PC-9 (cell line): ENCODE measurements at regions of chr13 and their contacts with region 1.

Region 1: DNA sequence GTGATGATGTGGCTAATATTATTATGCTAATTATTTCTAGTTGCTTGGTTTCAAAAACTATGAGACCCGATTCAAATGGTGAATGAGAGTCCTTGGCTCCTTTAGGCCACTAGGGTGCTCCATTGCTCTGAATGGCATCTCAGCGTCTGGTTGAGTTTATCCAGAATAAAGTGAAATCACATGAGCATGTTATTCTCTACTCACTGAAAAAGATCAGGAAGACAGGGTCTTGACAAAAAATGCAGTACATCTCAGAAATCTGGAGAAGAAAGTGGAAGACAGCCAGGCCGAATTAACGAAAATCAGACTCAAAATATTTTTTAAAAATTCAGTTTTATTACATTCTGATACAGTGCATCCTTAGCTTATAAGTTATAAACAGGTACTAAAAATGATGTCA is 516.2 kb downstream of the MYO16 start:
- DNase-seq: peak; percentile 37 to 64
- H3K4me3 ChIP-seq: no peak overlapping the region
- H3K27ac ChIP-seq: no peak overlapping the region
- H3K4me1 ChIP-seq: peaks cover 8% of the 10 kb centered on the region; the same call in 1 of the 2 replicates
- H3K27me3 ChIP-seq: no peaks in the 10 kb centered on the region
- CTCF ChIP-seq: peak; percentile 87

Region 2: GRCh38 chr13:108961542-108962125 is 184.0 kb before region 1 on chr13:
- CTCF ChIA-PET with region 1: no interaction called
- POLR2A ChIA-PET with region 1: no interaction called
- intact Hi-C with region 1: loop called (anchors 5 kb)
- DNase-seq: peak in 1 of 2 experiments; percentile 63
- H3K4me3 ChIP-seq: no peak overlapping the region
- H3K27ac ChIP-seq: peak overlapping the region; percentile 25
- H3K4me1 ChIP-seq: peaks cover 46% of the 10 kb centered on the region
- H3K27me3 ChIP-seq: no peaks in the 10 kb centered on the region
- CTCF ChIP-seq: peak; percentile 98

Region 3: GRCh38 chr13:109243311-109243951 is 97.8 kb after region 1 on chr13:
- CTCF ChIA-PET with region 1: no interaction called
- POLR2A ChIA-PET with region 1: no interaction called
- intact Hi-C with region 1: loop called (anchors 1 kb)
- DNase-seq: peak; percentile 75 to 96
- H3K4me3 ChIP-seq: peak overlapping the region; percentile 22; the same call in 1 of the 2 replicates
- H3K27ac ChIP-seq: peak overlapping the region; percentile 92
- H3K4me1 ChIP-seq: peaks cover 39% of the 10 kb centered on the region
- H3K27me3 ChIP-seq: no peaks in the 10 kb centered on the region
- CTCF ChIP-seq: no peak

Region 4: GRCh38 chr13:109331898-109332297 is 186.3 kb after region 1 on chr13:
- CTCF ChIA-PET with region 1: no interaction called
- POLR2A ChIA-PET with region 1: no interaction called
- intact Hi-C with region 1: loop called (anchors 5 kb)
- DNase-seq: peak in 1 of 2 experiments; percentile 49
- H3K4me3 ChIP-seq: no peak overlapping the region
- H3K27ac ChIP-seq: no peak overlapping the region
- H3K4me1 ChIP-seq: peaks cover 23% of the 10 kb centered on the region
- H3K27me3 ChIP-seq: no peaks in the 10 kb centered on the region
- CTCF ChIP-seq: no peak

Region 5: GRCh38 chr13:109606520-109606919 is 460.9 kb after region 1 on chr13:
- CTCF ChIA-PET with region 1: no interaction called
- POLR2A ChIA-PET with region 1: no interaction called
- intact Hi-C with region 1: loop called (anchors 10 kb)
- DNase-seq: no peak
- H3K4me3 ChIP-seq: no peak overlapping the region
- H3K27ac ChIP-seq: no peak overlapping the region
- H3K4me1 ChIP-seq: no peaks in the 10 kb centered on the region
- H3K27me3 ChIP-seq: no peaks in the 10 kb centered on the region
- CTCF ChIP-seq: no peak

Region 6: GRCh38 chr13:109778102-109778542 is 632.5 kb after region 1 on chr13:
- CTCF ChIA-PET with region 1: no interaction called
- POLR2A ChIA-PET with region 1: no interaction called
- intact Hi-C with region 1: loop called (anchors 2 kb)
- DNase-seq: peak; percentile 43 to 98
- H3K4me3 ChIP-seq: peak overlapping the region; percentile 87
- H3K27ac ChIP-seq: peak overlapping the region; percentile 83
- H3K4me1 ChIP-seq: peaks cover 58% of the 10 kb centered on the region
- H3K27me3 ChIP-seq: no peaks in the 10 kb centered on the region
- CTCF ChIP-seq: no peak

Region 7: GRCh38 chr13:110138010-110138699 is 992.5 kb after region 1 on chr13:
- CTCF ChIA-PET with region 1: no interaction called
- POLR2A ChIA-PET with region 1: no interaction called
- intact Hi-C with region 1: loop called (anchors 5 kb)
- DNase-seq: peak; percentile 82 to 94
- H3K4me3 ChIP-seq: peak overlapping the region; percentile 67
- H3K27ac ChIP-seq: peak overlapping the region; percentile 95
- H3K4me1 ChIP-seq: peaks cover 42% of the 10 kb centered on the region
- H3K27me3 ChIP-seq: no peaks in the 10 kb centered on the region
- CTCF ChIP-seq: peak; percentile 42; the same call in 1 of the 2 replicates